ENCODE measurements at regions of chr3 and their contacts with region 1.

Region 1: GRCh38 chr3:149771652-149772271 is 19.5 kb upstream of the COMMD2 start:
- DNase-seq: no peak
- H3K4me3 ChIP-seq: no peak overlapping the region
- H3K27ac ChIP-seq: no peak overlapping the region
- H3K4me1 ChIP-seq: no peaks in the 10 kb centered on the region
- H3K27me3 ChIP-seq: peaks cover 0 to 12% (median 0%) of the 10 kb centered on the region in 4 donors
- CTCF ChIP-seq: peak; percentile 26 to 76 (median 56)
- POLR2A ChIP-seq: no peak

Region 2: GRCh38 chr3:149494022-149494758 is 277.6 kb before region 1 on chr3:
- intact Hi-C with region 1: loop called (anchors 10 kb)
- DNase-seq: no peak
- H3K4me3 ChIP-seq: no peak overlapping the region
- H3K27ac ChIP-seq: no peak overlapping the region
- H3K4me1 ChIP-seq: peaks cover 0 to 4% (median 0%) of the 10 kb centered on the region in 3 donors
- H3K27me3 ChIP-seq: peaks cover 0 to 6% (median 0%) of the 10 kb centered on the region in 4 donors
- CTCF ChIP-seq: peak; percentile 39 to 82 (median 80)
- POLR2A ChIP-seq: no peak

Region 3: DNA sequence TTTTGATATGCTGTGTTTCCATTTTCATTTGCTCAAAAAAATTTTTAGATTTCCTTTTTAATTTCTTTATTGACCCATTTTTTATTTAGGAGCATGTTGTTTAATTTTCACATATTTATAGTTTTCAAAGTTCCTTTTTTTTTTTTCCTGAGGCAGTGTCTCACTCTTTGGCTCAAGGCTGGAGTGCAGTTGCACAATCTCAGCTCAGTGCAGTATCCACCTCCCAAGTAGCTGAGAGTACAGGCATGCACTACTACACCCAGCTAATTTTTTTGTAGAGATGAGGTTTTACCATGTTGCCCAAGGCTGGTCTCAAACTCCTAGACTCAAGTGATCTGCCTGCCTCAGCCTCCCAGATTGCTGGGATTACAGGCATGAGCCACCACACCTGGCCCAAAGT is 162.8 kb after region 1 on chr3:
- intact Hi-C with region 1: no loop called
- DNase-seq: no peak
- H3K4me3 ChIP-seq: no peak overlapping the region
- H3K27ac ChIP-seq: no peak overlapping the region
- H3K4me1 ChIP-seq: peaks cover 0 to 16% (median 4%) of the 10 kb centered on the region in 3 donors
- H3K27me3 ChIP-seq: no peaks in the 10 kb centered on the region
- CTCF ChIP-seq: no peak
- POLR2A ChIP-seq: no peak

Measured in esophagus squamous epithelium (tissue), 5 donors.